Uterus (tissue), 4 donors: ENCODE measurements at regions of chr6 and their contacts with region 1.

Region 1: GRCh38 chr6:31834434-31835198 is 7.1 kb downstream of the HSPA1B start:
- DNase-seq: peak; percentile 83 to 91
- H3K4me3 ChIP-seq: peak overlapping the region; percentile 79 to 95
- H3K27ac ChIP-seq: peak overlapping the region; percentile 91 to 99
- H3K4me1 ChIP-seq: peaks cover 0 to 20% of the 10 kb centered on the region in 2 donors
- H3K27me3 ChIP-seq: no peaks in the 10 kb centered on the region
- CTCF ChIP-seq: no peak
- POLR2A ChIP-seq: peak; percentile 60 to 71

Region 2: GRCh38 chr6:31680840-31681671 is 153.6 kb before region 1 on chr6 and contains the start of gene LY6G5C:
- intact Hi-C with region 1: loop called (anchors 5 kb)
- DNase-seq: peak; percentile 85 to 86
- H3K4me3 ChIP-seq: peak within 1 kb of the TSS; percentile 40 to 56
- H3K27ac ChIP-seq: peak within 1 kb of the TSS; percentile 71 to 88
- H3K4me1 ChIP-seq: peaks cover 0 to 4% of the 10 kb centered on the region in 2 donors
- H3K27me3 ChIP-seq: no peaks in the 10 kb centered on the region
- CTCF ChIP-seq: peak; percentile 70 to 92 (median 82)
- POLR2A ChIP-seq: peak in 1 of 2 donors; percentile 19
- total RNA-seq, gene LY6G5C: 1.0 to 4.4 (median 3.8) TPM in 3 of 4 donors, not detected in the other

Region 3: DNA sequence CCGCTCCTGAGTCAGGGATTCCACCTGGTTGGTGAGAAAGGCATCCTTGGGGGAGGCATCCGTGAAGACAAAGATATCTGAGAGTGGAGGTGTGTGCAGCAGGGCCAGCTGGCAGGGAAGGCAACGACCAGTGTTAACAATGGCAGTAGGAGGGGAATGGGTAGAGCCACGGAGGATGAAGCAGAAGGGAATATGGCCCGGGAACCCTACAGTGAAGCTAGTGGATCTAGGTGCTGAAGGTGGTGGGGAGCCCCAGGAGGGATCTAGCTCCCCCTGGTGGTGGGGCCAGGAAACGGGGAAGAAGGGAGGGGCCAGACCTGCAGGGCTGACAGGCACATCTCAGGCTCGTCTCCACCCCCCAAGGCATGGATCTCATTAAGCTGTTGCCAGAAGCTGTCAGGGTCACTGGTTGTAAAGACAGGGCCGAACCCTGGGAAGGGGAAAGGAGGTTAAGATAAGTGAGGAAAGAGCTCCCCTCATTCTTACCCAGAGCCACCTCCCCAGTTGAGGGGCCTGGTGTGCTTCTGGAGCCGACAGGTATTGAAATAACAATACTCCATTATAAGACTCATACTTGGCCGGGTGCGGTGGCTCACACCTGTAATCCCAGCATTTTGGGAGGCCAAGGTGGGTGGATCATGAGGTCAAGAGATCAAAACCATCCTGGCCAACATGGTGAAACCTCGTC is 64.8 kb before region 1 on chr6:
- intact Hi-C with region 1: no loop called
- DNase-seq: peak in 1 of 2 donors; percentile 42
- H3K4me3 ChIP-seq: no peak overlapping the region
- H3K27ac ChIP-seq: no peak overlapping the region
- H3K4me1 ChIP-seq: no peaks in the 10 kb centered on the region
- H3K27me3 ChIP-seq: no peaks in the 10 kb centered on the region
- CTCF ChIP-seq: peak; percentile 20 to 56 (median 40)
- POLR2A ChIP-seq: no peak

Region 4: DNA sequence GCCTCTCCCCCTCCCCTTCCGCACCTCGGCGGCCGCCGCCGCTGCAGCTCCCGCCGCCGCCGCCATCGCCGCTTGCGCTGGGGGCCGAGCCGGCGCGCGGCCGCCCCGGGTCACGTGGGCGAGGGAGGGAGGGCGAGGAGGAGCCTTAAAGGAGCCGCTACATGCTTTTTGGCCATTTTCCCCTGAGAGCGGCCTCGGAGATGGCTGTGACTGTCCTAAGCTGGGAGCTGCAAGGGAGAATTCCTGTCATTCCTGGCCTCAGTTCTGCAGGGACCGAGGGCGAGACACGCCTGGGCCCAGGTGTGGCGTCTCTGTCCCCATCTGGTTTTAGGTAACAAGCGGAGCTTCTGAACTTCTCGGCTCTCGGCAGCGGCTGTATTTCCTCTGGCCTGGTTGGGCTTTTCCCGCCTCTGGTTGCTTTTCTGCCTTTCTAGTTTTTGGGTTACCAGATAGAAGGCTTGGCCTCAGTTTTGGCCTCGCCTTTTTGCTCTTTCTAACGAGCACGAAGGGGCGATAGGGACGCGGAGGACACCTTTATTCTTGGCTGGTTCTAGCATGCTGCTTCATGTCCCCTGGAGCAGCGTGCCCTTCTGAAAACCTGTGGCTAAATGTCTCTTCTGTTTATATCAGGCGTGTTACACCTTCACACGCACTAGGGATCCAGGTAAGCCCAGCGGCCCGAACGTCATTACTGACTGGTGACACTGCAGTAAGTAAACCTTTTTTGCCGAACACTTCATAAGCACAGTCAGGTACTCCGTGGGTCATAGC is 63.2 kb after region 1 on chr6 and contains the start of gene EHMT2:
- intact Hi-C with region 1: no loop called
- DNase-seq: peak; percentile 81 to 86
- H3K4me3 ChIP-seq: peak within 1 kb of the TSS; percentile 63 to 94
- H3K27ac ChIP-seq: peak within 1 kb of the TSS; percentile 84 to 97
- H3K4me1 ChIP-seq: peaks cover 0 to 7% of the 10 kb centered on the region in 2 donors
- H3K27me3 ChIP-seq: no peaks in the 10 kb centered on the region
- CTCF ChIP-seq: peak in 3 of 4 experiments; percentile 23 to 70 (median 59)
- POLR2A ChIP-seq: peak; percentile 77 to 79
- total RNA-seq, gene EHMT2: 13.8 to 72.4 (median 66.2) TPM